ENCODE measurements at regions of chr18 and their contacts with region 1.

Region 1: DNA sequence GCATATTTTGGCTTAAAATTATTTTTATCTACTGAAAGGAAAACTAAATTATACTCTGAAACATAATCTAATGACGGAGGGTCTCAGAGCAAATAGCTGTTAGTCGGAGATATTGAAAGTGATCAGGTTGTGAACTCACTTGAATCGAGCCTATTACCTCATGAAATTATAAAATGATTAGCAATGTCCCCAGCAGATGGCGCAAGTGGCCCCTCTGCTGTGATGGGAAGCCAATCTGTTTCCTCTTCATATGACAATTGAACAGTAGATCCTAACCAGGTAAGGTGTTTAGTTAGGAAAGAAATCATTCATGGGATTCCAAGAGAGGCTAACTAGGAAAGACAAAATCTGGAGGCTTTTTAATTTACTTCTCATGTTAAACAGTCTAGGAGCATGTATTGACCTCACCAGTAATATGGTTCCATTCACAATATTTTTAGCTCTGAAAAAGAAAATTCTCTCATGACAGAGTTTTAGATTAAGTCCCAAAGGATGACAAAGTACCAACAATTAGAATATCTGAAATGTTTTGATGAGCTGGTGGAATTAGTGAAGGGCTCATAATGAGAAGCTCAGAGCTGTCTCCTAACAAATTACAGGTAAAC is 29.9 kb upstream of the MPPE1 start:
- DNase-seq: peak in 2 of 3 donors; percentile 82 to 96
- ATAC-seq: peak; percentile 88
- H3K4me3 ChIP-seq: no peak overlapping the region
- H3K4me1 ChIP-seq: no peaks in the 10 kb centered on the region
- CTCF ChIP-seq: peak; percentile 61

Region 2: GRCh38 chr18:11808001-11808855 is 129.7 kb before region 1 on chr18:
- intact Hi-C with region 1: no loop called
- DNase-seq: no peak
- ATAC-seq: no peak
- H3K4me3 ChIP-seq: no peak overlapping the region
- H3K4me1 ChIP-seq: no peaks in the 10 kb centered on the region
- CTCF ChIP-seq: no peak

Region 3: DNA sequence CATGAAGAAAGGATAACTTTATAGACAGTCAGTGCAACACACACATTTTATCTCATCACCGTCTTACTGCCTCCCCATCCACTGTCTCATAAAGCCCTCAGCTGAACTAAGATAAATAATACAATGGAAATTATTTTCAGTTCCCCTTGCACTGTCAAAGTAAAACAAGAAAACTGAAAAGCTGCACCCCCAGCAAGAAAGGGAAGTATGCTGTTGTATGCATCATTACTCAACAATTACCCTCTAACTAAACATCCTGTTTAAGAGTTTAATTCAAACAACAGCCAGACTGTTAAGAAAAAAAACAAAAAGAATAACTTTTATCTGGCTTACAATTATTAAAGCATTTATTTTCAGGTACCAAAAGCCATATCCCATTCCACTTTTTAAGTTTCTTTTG is 54.8 kb before region 1 on chr18:
- intact Hi-C with region 1: no loop called
- DNase-seq: no peak
- ATAC-seq: no peak
- H3K4me3 ChIP-seq: no peak overlapping the region
- H3K4me1 ChIP-seq: peaks cover 15% of the 10 kb centered on the region
- CTCF ChIP-seq: no peak

Region 4: GRCh38 chr18:11995445-11996189 is 57.6 kb after region 1 on chr18:
- intact Hi-C with region 1: loop called (anchors 10 kb)
- DNase-seq: peak; percentile 83 to 88 (median 83)
- ATAC-seq: peak; percentile 76
- H3K4me3 ChIP-seq: no peak overlapping the region
- H3K4me1 ChIP-seq: peaks cover 32% of the 10 kb centered on the region
- CTCF ChIP-seq: peak; percentile 48

Region 5: DNA sequence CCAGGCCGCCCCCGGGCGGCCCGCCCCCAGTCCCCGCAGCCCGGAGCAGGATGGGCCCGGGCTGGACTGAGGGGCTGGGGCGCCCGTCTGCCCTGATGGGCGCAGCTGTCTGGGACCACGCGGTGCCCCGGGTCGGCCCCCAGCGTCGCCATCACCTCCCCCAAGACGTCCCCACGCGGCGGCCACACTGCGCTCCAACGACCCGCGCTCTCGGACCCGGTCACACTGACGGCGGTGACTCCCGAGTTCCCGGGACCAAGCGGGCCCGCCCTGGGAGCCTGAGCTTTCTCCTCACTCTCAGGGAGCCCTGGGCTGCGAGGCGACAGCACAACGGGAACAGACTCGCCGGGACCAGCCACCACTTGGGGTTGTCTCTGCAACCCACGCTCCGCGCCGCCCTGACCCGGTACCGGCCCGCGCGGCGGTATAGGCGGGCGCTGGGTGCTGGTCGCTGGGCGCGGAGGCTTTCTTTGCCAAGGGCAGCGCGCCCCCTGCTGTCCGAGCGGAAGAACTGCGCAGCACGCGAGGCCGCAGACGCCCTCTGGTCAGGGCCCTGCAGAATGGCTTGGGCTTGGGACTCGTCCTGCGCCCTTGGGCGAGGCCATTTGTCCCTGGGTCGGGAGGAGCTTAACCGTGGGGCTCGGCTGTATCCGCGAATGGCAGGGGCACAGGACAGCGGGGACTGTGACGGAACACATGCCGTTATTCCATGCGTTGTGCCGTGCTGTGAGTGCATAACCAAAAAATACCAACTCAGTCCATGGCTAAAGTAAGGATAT is 100.9 kb after region 1 on chr18:
- intact Hi-C with region 1: loop called (anchors 2 to 5 kb)
- DNase-seq: peak; percentile 87 to 92 (median 87)
- ATAC-seq: peak; percentile 98
- H3K4me3 ChIP-seq: no peak overlapping the region
- H3K4me1 ChIP-seq: no peaks in the 10 kb centered on the region
- CTCF ChIP-seq: peak; percentile 95